AG04449 (cell line): ENCODE measurements at regions of chr17 and their contacts with region 1.

Region 1: DNA sequence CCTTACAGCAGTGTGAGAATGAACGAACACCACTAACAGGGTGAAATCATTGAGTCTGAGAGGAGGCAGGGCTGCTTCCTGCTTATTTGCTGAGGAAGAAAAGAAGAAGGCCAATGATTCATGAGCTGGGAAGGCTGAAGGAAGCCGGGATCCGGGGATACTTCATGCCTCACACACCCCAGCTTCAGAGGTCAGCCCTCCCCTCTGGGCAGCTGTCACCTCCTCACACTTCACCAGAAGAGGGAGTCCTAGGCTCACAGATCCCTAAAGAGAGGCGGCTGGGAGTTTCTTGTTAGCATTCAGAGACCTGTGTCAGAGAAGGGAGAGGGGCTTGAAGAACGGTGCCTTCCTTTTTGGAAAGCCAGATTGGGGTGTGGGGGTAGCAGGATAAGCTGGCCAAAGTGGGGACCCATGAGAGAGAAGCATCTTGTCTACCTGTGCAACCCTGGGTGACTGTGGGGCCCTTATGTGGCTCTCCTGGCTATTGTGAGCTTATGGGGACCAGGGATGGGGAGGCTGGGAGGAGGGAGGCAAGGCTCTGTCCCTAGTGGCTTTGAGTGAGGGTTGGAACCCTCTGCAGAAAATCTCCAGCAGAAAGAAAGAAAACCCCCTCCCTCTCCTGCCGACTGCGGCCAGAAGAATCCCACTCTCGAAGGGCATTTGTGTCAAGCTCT is 94.6 kb downstream of the RGS9 start:
- DNase-seq: peak; percentile 59
- H3K4me3 ChIP-seq: no peak overlapping the region
- CTCF ChIP-seq: peak; percentile 86

Region 2: DNA sequence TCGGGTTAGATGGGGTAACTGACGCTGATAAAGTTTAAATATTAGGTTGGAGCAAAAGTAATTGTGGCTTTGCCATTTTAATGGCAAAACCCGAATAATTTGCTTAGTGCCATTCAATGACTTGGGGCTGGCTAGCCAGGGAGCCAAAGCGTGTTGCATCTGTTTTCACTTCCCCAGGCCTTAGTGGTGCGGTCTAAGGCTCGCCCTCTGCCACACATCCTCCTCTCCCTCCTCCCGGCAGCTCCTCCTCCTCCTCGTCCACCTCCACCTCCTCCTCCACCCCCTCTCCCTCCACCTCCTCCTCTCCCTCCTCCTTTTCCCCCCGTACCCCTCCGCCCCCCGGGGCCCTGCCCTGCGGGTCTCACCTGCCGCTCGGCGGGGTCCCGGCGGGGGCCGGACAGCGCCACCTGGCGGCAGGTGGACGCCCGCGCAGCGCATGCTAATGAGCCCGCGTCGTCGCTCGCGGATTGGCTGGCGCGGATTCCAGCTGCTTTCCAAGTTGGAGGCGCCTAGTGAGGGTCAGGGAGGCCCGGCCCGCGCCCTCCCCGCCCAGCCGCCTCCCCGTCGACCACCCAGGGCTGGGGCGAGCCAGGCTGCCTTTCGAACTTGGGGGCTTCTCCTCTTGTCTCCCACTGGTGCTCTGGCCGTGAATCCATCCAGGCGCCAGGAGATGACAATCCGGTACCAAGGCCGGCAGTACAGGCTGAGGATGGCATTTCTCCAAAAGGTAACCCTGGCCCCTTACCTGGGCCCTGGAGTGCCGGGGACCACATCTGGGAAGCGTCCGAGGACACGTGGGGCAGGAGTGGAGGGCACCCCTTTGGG is 131.3 kb before region 1 on chr17:
- CTCF ChIA-PET with region 1: no interaction called
- POLR2A ChIA-PET with region 1: no interaction called
- DNase-seq: no peak
- H3K4me3 ChIP-seq: peak overlapping the region; percentile 54
- CTCF ChIP-seq: peak; percentile 91

Region 3: GRCh38 chr17:65243802-65244220 is 12.0 kb after region 1 on chr17:
- CTCF ChIA-PET with region 1: interaction called, 14 read pairs
- POLR2A ChIA-PET with region 1: no interaction called
- DNase-seq: no peak
- H3K4me3 ChIP-seq: no peak overlapping the region
- CTCF ChIP-seq: no peak

Region 4: GRCh38 chr17:65278050-65278819 is 46.4 kb after region 1 on chr17:
- CTCF ChIA-PET with region 1: interaction called, 13 read pairs
- POLR2A ChIA-PET with region 1: no interaction called
- DNase-seq: no peak
- H3K4me3 ChIP-seq: no peak overlapping the region; the same call in 1 of the 2 replicates
- CTCF ChIP-seq: peak; percentile 84

Region 5: GRCh38 chr17:65556014-65556909 is 324.5 kb after region 1 on chr17:
- CTCF ChIA-PET with region 1: interaction called, 32 read pairs
- POLR2A ChIA-PET with region 1: no interaction called
- DNase-seq: no peak
- H3K4me3 ChIP-seq: no peak overlapping the region
- CTCF ChIP-seq: peak; percentile 74

Region 6: DNA sequence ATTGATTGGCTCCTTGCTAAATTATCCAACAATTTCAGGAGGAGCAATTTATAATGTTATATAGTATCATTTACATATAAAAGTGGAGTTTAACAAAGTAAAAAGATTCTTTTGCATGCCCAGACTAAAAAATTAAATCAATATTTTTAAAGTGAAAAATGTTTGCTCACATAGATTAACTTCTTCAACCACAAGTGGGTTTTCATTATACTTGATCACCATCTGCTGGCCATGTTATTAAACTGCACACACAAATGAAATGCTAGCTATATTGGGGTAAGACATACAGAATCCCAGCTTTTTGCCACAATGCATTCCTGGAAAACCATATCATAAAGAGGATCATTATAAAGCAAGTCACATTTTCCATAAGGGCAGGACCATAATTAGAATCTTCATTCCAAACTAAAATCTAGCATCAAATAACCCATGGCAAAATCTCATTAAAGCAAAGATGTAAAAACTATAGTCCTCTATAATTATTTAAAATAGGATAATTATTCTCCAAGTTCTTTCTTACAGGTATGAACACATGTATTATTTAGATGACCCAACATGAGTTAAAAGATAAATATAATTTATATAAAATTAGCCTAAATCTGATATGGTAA is 933.8 kb after region 1 on chr17:
- CTCF ChIA-PET with region 1: interaction called, 107 read pairs
- POLR2A ChIA-PET with region 1: no interaction called
- DNase-seq: peak; percentile 16
- H3K4me3 ChIP-seq: no peak overlapping the region
- CTCF ChIP-seq: peak; percentile 46